ENCODE measurements at regions of chr19 and their contacts with region 1.

Region 1: DNA sequence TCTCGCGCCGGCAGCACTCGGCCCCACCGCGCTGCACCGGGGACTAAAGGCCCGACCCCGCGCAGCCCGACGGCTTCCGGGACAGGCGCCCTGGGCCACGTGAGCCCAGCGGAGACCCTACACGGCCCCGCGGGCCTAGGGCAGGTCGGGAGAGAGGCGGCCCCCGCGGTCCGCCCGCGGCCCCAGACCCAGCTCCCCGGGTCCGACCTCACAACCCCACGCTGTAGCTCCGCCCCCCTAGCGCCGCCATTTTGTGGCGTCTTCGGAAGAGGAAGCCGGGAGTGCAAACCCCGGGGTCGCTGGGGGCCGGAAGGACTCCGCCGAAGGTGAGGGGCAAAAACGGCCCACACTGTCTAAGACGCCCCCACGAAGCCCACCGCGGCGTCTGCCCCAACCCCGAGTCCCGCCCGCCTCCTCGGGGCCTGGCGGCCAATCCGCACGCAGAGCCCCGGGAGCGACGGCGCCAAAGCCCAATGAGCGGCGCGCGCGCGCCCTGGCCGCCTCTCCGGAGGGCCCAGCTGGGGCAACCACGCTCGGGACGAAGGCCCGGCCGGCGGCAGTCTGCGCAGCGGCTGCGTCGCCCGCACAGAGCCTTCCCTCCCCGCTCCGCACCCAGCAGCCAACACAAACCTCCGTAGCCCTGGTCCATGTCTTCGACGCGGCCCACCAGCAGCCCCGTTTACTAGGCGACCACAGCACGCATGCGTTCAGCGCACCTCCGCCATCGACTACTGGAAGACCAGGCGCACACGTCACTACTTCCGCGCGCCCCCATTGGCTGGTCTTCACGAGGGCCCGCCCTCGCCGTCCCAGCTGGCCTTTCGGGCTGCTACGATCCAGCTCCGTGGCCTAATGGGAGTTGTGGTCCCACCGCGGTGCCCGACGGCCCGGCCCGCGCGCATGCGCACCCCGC is at the start of gene AKAP8:
- DNase-seq: peak; percentile 98 to 100 (median 99)
- H3K4me3 ChIP-seq: peak within 1 kb of the TSS; percentile 84 to 99 (median 99)
- H3K4me3 Mint-ChIP-seq: peak within 1 kb of the TSS; percentile 99 to 100
- H3K27ac ChIP-seq: peak within 1 kb of the TSS; percentile 79 to 96
- H3K27ac Mint-ChIP-seq: peak within 1 kb of the TSS; percentile 87 to 99 (median 98)
- H3K4me1 ChIP-seq: peaks cover 21 to 31% of the 10 kb centered on the region in 2 donors
- H3K4me1 Mint-ChIP-seq: peaks cover 27% of the 10 kb centered on the region
- H3K27me3 ChIP-seq: no peaks in the 10 kb centered on the region
- H3K27me3 Mint-ChIP-seq: peaks cover 0 to 1% (median 1%) of the 10 kb centered on the region in 3 donors
- CTCF ChIP-seq: no peak
- polyA plus RNA-seq, gene AKAP8: 8.0 to 25.9 (median 12.3) TPM

Region 2: DNA sequence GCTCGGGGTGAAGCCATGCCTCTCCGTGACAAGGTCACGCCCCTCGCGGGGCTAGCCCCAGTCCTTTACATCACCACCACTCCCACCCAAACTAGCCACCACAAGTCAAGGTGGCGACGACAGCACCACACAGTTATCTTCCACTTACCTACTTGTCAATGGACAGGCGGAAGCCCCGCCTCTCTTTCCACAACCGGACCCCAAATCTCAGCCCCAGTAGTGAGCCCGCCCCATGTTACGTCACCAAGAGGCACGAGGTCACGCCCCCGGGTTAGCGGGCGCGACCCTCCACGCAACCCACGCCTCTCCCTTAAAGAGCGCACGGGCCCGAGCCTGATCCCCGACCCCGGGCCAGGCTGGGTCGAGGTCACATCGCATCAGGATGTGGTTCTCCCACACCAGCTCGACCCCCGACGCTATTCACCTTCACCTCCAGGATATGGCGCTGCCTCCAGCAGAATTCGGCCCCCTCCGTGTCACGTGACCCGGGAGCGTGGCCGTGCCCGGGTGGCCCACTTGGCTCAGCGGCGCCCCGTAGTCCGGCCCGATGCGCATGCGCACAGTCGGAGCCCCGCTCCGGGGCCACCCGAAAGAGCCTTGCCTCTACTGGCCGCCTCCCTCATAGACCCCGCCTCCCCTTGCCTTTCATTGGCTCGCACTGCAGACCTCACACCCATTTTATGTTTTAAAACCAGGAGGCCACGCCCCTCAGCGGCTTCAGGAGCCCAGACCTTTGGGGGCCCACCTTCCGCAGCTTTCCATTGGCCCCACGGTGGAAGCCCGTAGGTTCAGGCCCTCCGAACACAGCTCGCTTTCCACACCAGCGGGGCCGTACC is 253.9 kb before region 1 on chr19:
- intact Hi-C with region 1: loop called in 1 of 2 experiments (anchors 10 kb)
- DNase-seq: peak; percentile 97 to 98 (median 97)
- H3K4me3 ChIP-seq: peak overlapping the region; percentile 72 to 99 (median 80)
- H3K4me3 Mint-ChIP-seq: peak overlapping the region; percentile 95 to 100
- H3K27ac ChIP-seq: peak overlapping the region; percentile 86 to 90
- H3K27ac Mint-ChIP-seq: peak overlapping the region; percentile 96 to 99 (median 97)
- H3K4me1 ChIP-seq: peaks cover 13% of the 10 kb centered on the region in 2 donors
- H3K4me1 Mint-ChIP-seq: peaks cover 11% of the 10 kb centered on the region
- H3K27me3 ChIP-seq: no peaks in the 10 kb centered on the region
- H3K27me3 Mint-ChIP-seq: peaks cover 0 to 4% (median 2%) of the 10 kb centered on the region in 3 donors
- CTCF ChIP-seq: no peak

Region 3: DNA sequence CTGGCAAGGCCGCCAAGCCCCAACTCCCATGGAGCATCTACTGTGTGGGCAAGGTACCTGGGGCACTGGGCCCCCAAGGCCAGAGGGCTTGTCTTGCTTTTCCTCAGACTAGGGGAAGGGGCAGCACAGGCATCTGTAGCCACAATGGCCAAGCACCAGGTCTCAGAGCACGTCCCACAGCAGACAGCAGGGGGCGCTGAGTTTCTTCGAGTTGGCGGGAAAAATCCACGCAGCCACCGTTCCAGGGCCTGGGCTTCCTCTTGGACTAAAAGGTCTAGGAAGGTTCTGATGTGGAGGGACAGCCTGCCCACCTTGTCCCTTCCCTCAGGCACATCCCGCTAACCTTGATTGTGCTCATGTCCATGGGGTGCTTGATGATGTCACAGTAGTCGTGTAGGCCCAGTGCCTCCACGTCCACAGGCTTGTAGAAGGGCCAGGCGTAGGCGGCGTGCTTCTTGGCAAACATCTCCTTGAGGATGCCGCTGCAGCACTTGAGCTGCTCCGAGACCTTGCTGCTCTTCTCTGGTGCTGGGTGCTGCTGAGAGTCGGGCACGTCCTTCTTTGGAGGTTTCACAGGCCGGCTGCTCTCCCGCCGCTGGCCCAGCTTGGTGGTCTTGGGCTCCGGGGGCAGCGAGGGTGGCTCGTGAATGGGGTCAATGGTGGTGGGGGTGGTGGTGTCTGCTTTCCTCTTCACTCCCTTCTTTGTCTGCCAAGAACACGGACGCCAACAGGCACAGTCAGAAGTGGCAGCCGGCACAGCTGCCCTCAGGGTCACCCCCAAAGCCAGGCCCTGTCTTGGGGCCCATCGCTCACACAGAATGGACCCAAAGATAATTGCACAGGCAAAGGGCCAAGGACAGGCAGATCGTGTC is 115.0 kb before region 1 on chr19:
- intact Hi-C with region 1: loop called (anchors 5 to 10 kb)
- DNase-seq: peak; percentile 40 to 62 (median 48)
- H3K4me3 ChIP-seq: no peak overlapping the region
- H3K4me3 Mint-ChIP-seq: no peak overlapping the region
- H3K27ac ChIP-seq: peak overlapping the region in 1 of 2 donors; percentile 18
- H3K27ac Mint-ChIP-seq: peak overlapping the region in 2 of 7 donors; percentile 19 to 54
- H3K4me1 ChIP-seq: no peaks in the 10 kb centered on the region
- H3K4me1 Mint-ChIP-seq: no peaks in the 10 kb centered on the region
- H3K27me3 ChIP-seq: no peaks in the 10 kb centered on the region
- H3K27me3 Mint-ChIP-seq: no peaks in the 10 kb centered on the region
- CTCF ChIP-seq: peak; percentile 93

Region 4: DNA sequence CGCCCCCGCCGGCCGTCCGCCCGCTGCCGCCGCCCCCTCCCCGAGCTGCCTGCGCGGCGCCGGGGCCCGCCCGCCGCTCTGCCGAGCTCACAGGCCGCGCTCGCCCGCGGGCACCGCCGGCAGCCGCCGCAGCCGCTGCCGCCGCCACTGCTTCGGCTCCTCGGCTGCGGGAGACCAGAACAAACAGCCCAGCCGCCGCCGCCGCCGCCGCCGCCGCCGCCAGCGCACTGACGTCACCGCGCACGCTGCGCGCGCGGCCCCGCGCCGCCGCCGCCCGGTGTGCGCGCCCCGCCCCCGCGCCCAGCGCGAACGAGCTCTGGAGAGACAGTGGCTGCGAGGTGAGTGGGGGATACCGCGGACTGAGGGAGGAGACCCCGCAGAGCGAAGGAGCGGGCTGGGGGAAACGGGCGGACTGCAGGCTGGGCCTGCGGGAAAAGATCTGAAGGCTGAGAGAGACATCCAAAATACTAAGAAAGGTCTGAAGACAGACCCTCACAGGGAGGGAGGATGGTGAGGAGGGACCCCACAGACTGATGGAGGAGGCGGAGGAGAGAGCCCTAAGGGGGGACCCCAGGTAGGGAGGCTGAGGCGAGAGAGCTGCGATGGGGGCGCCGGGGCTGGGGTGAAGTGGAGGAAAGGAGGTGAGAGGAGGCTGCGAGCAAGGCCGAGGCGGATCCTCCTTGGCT is 46.9 kb before region 1 on chr19 and contains the start of gene BRD4:
- intact Hi-C with region 1: loop called (anchors 5 kb)
- DNase-seq: peak in 2 of 3 donors; percentile 57 to 73
- H3K4me3 ChIP-seq: peak within 1 kb of the TSS; percentile 89 to 98 (median 90)
- H3K4me3 Mint-ChIP-seq: peak within 1 kb of the TSS; percentile 98 to 99
- H3K27ac ChIP-seq: peak within 1 kb of the TSS; percentile 81 to 97
- H3K27ac Mint-ChIP-seq: peak within 1 kb of the TSS; percentile 95 to 99 (median 99)
- H3K4me1 ChIP-seq: peaks cover 50 to 62% of the 10 kb centered on the region in 2 donors
- H3K4me1 Mint-ChIP-seq: peaks cover 50% of the 10 kb centered on the region
- H3K27me3 ChIP-seq: no peaks in the 10 kb centered on the region
- H3K27me3 Mint-ChIP-seq: peaks cover 0 to 5% (median 0%) of the 10 kb centered on the region in 3 donors
- CTCF ChIP-seq: no peak
- polyA plus RNA-seq, gene BRD4: 3.7 to 19.2 (median 4.2) TPM

Region 5: DNA sequence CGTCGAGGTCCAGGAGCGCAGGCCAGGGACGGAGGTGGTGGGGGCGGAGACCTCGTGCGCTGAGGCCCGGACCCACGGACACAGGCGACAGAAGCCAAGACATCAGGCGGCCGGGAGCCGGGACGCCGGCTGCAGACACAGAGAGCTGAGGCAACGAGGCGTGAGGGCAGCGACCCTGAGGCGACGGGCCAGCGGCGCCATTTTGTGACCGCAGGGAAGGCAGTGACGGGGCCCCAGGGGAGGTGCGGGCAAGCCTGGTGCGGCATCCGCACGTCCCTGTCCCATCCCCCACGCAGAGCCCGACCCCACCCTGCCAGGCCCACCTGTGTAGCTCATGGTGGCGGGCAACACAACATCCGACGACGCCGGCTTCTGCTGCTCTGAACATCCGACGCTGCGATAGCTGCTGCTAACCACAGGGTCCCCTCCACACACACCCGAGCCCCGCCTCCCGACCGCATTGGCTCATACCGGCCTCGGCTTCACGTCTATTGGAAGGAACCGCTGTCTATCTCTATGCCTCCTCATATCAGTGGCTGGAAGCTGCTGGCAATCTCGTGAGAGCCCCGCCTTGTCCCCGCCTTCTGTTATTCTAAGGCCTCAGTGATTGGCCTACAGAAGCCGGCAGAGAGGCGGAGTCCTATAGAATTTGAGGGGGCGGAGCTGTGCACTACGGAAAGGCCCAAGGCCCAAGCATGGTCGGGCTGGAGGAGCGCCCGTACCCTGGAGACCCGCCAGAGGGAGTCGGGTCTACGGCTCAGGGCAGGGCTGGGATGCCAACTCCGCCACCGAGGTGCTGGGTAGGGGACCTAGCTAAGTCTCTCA is 39.5 kb after region 1 on chr19 and contains the start of gene AKAP8L:
- intact Hi-C with region 1: loop called (anchors 5 kb)
- DNase-seq: peak; percentile 99 to 100 (median 99)
- H3K4me3 ChIP-seq: peak within 1 kb of the TSS; percentile 86 to 97 (median 97)
- H3K4me3 Mint-ChIP-seq: peak within 1 kb of the TSS; percentile 97 to 99
- H3K27ac ChIP-seq: peak within 1 kb of the TSS; percentile 55 to 92
- H3K27ac Mint-ChIP-seq: peak within 1 kb of the TSS; percentile 90 to 99 (median 97)
- H3K4me1 ChIP-seq: peaks cover 19 to 26% of the 10 kb centered on the region in 2 donors
- H3K4me1 Mint-ChIP-seq: peaks cover 31% of the 10 kb centered on the region
- H3K27me3 ChIP-seq: no peaks in the 10 kb centered on the region
- H3K27me3 Mint-ChIP-seq: no peaks in the 10 kb centered on the region
- CTCF ChIP-seq: peak; percentile 77
- polyA plus RNA-seq, gene AKAP8L: 21.4 to 103 (median 39.0) TPM